A673 (cell line): ENCODE measurements at regions of chr12 and their contacts with region 1.

Region 1: GRCh38 chr12:89461649-89462612 is 62.7 kb downstream of the GALNT4 start:
- DNase-seq: peak; percentile 91
- H3K4me3 ChIP-seq: peak overlapping the region; percentile 18
- H3K27ac ChIP-seq: peak overlapping the region; percentile 88
- H3K4me1 ChIP-seq: peaks cover 77% of the 10 kb centered on the region
- H3K27me3 ChIP-seq: no peaks in the 10 kb centered on the region
- CTCF ChIP-seq: peak; percentile 66

Region 2: GRCh38 chr12:89051065-89051677 is 410.8 kb before region 1 on chr12:
- CTCF ChIA-PET with region 1: interaction called, 5 read pairs
- POLR2A ChIA-PET with region 1: no interaction called
- intact Hi-C with region 1: loop called (anchors 1 kb)
- DNase-seq: peak; percentile 86
- H3K4me3 ChIP-seq: no peak overlapping the region
- H3K27ac ChIP-seq: no peak overlapping the region
- H3K4me1 ChIP-seq: peaks cover 66% of the 10 kb centered on the region
- H3K27me3 ChIP-seq: no peaks in the 10 kb centered on the region
- CTCF ChIP-seq: peak; percentile 95

Region 3: GRCh38 chr12:89140602-89141238 is 321.2 kb before region 1 on chr12:
- CTCF ChIA-PET with region 1: no interaction called
- POLR2A ChIA-PET with region 1: no interaction called
- intact Hi-C with region 1: loop called (anchors 5 kb)
- DNase-seq: no peak
- H3K4me3 ChIP-seq: no peak overlapping the region
- H3K27ac ChIP-seq: no peak overlapping the region
- H3K4me1 ChIP-seq: peaks cover 46% of the 10 kb centered on the region
- H3K27me3 ChIP-seq: no peaks in the 10 kb centered on the region
- CTCF ChIP-seq: no peak